Activated CD4-positive, alpha-beta T cell treated with anti-CD3 and anti-CD28 coated beads for 36 hours (primary cell): ENCODE measurements at regions of chr12 and their contacts with region 1.

Region 1: DNA sequence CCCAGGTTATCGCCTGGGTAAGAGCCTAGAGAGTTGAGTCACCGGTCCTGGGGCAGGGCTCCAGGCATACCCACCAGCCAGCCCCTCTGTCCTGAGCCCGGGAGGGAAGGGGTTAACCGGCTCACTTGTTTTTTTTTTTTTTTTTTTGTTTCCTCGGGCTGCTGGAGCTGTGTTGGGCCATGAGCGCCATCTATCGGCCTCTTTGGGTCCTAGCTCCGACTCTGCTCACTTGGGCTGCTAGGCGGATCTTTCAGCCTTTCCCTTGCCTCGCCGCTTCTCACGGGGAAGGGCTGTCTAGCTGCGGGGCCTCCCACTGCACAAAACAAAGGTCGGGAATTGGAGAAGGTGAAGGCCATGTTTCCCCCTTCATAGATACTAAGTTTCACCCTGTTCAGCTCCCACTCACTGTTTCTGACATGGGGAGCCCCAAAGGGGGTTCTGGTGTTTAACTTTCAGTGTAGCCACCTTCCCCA is 2.8 kb upstream of the SMUG1 start:
- DNase-seq: peak; percentile 87
- ATAC-seq: peak; percentile 60
- H3K4me3 Mint-ChIP-seq: no peak overlapping the region
- H3K27ac Mint-ChIP-seq: no peak overlapping the region
- H3K4me1 Mint-ChIP-seq: peaks cover 17% of the 10 kb centered on the region
- H3K27me3 Mint-ChIP-seq: peaks cover 35% of the 10 kb centered on the region

Region 2: GRCh38 chr12:53727310-53728041 is 464.1 kb before region 1 on chr12 and contains the start of gene CALCOCO1:
- CTCF ChIA-PET with region 1: no interaction called
- POLR2A ChIA-PET with region 1: no interaction called
- intact Hi-C with region 1: loop called in 1 of 2 experiments (anchors 1 kb)
- DNase-seq: peak; percentile 99
- ATAC-seq: peak; percentile 99
- H3K4me3 Mint-ChIP-seq: peak within 1 kb of the TSS; percentile 80
- H3K27ac Mint-ChIP-seq: peak within 1 kb of the TSS; percentile 73
- H3K4me1 Mint-ChIP-seq: peaks cover 20% of the 10 kb centered on the region
- H3K27me3 Mint-ChIP-seq: no peaks in the 10 kb centered on the region
- total RNA-seq, gene CALCOCO1: 17.1 to 20.4 TPM

Region 3: DNA sequence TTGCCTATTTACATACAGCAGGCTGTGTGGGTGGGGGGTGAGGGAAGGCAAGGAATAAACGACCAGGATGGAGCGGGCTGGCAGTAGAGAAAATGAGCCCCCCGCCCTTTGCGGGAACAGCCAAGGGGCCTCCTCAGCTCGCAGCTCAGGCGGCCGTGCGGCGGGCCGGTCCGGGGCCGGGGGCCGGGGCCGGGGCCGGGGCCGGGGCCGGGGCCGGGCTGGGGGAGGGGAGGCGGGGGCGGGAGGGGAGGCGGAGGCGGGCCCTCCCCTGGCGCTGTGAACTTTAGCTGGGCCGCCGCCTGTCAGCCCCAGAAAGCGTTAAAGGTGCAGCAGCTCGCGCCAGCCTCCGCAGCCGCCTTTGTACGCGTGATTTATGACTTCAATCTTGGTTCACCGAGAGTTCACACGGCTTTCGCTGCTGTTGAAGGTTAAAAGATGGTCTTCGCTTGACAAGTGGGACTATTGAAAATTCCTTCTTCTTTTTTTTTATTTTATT is 109.1 kb before region 1 on chr12:
- CTCF ChIA-PET with region 1: no interaction called
- POLR2A ChIA-PET with region 1: no interaction called
- intact Hi-C with region 1: loop called in 1 of 2 experiments (anchors 5 kb)
- DNase-seq: peak; percentile 66
- ATAC-seq: no peak
- H3K4me3 Mint-ChIP-seq: peak overlapping the region; percentile 74
- H3K27ac Mint-ChIP-seq: no peak overlapping the region
- H3K4me1 Mint-ChIP-seq: peaks cover 20% of the 10 kb centered on the region
- H3K27me3 Mint-ChIP-seq: peaks cover 8% of the 10 kb centered on the region

Region 4: DNA sequence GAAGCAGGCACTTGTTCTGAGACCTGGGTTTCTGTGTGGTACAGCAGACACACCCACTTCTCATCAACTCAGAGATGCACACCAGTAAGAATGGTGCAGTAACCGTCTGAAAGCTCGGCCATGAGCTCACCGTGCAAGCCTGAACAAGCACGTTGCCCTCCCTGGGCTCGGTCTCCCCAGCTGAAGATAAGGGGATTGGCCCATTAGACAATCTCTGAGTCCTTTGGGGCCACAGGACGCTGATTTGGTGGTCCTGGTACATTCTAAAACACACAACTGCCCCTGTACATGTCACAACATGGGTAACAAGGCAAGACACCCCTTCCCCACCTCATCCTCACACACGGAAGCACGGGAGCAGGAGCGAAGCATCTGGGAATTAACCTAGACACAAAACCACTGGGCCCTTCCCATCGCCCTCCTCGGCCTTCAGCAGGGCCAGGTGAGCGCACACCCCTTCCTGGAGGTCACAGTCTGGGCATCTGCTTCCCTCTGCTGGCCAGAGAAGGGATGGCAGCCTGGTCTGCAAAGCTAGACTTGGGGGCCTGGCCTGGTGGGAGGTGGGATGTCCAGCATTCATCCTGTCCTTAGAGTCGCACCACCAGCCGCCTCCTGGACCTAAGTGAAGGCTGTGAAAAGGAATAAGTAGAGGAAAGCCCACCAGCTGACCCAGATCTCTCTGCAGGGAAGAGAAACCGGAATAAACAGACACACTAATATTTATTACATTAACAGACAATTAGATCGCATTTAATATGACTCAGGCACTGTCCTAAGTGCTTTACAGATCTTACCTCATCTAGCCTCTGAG is 16.1 kb after region 1 on chr12:
- CTCF ChIA-PET with region 1: interaction called, 26 read pairs
- POLR2A ChIA-PET with region 1: interaction called, 3 read pairs
- intact Hi-C with region 1: no loop called
- DNase-seq: peak; percentile 88
- ATAC-seq: peak; percentile 93
- H3K4me3 Mint-ChIP-seq: no peak overlapping the region
- H3K27ac Mint-ChIP-seq: no peak overlapping the region
- H3K4me1 Mint-ChIP-seq: no peaks in the 10 kb centered on the region
- H3K27me3 Mint-ChIP-seq: peaks cover 25% of the 10 kb centered on the region

Region 5: DNA sequence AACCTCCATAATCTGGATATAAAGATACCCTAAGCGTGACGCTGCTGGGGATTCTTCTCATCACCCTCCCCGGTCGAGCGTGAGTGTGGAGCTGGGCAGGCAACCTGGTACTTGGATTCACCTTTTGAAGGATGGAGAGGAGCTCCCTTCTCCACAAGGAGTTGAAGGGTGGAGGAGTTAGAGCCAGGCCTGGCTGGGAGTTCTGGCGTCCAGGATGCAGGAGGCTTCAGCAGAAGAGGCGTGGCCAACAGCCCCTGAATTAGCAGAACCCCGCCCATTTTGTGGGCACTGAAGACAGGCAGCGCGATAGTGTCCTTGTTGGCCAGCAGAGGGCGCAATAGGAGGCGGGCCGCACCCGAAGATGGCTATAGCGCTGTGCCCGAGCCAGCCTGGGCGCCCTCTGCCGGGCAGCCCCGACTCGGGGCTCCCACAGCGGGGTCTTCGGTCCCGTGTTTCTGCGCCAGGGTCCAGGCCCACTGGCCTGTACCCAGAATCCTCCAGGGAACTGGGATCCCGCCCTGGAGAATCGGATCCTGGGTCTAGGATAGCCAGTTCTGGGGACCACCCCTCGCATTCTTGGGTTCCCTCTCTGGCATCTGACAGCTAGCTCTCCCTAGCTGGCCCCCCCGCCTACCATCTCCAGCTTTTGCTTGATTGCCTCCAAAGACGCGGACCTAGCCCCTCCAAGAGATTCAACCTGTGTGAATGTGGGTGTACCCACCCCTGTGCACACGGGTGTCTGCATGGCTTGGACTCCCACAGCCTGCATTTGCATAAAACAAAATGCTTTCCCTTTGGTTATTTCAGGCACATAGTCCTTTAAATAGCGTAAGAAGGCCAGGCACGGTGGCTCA is 23.2 kb after region 1 on chr12:
- CTCF ChIA-PET with region 1: interaction called, 9 read pairs
- POLR2A ChIA-PET with region 1: interaction called, 3 read pairs
- intact Hi-C with region 1: loop called in 1 of 2 experiments (anchors 1 kb)
- DNase-seq: peak; percentile 97
- ATAC-seq: peak; percentile 92
- H3K4me3 Mint-ChIP-seq: peak overlapping the region; percentile 63
- H3K27ac Mint-ChIP-seq: no peak overlapping the region
- H3K4me1 Mint-ChIP-seq: peaks cover 26% of the 10 kb centered on the region
- H3K27me3 Mint-ChIP-seq: peaks cover 15% of the 10 kb centered on the region